Activated CD4-positive, alpha-beta T cell treated with anti-CD3 and anti-CD28 coated beads, Interleukin-2, amount 10 ng/mL, durations not matched to agents 24 days and 14 days (primary cell): ENCODE measurements at regions of chr1 and their contacts with region 1.

Region 1: GRCh38 chr1:116372587-116373444 is at the start of gene ATP1A1:
- DNase-seq: peak; percentile 99
- H3K4me3 Mint-ChIP-seq: peak within 1 kb of the TSS; percentile 96
- H3K27ac Mint-ChIP-seq: peak within 1 kb of the TSS; percentile 96
- H3K4me1 Mint-ChIP-seq: peaks cover 32% of the 10 kb centered on the region
- H3K27me3 Mint-ChIP-seq: peaks cover 22% of the 10 kb centered on the region
- total RNA-seq, gene ATP1A1: 252 and 261 TPM in 2 replicates

Region 2: DNA sequence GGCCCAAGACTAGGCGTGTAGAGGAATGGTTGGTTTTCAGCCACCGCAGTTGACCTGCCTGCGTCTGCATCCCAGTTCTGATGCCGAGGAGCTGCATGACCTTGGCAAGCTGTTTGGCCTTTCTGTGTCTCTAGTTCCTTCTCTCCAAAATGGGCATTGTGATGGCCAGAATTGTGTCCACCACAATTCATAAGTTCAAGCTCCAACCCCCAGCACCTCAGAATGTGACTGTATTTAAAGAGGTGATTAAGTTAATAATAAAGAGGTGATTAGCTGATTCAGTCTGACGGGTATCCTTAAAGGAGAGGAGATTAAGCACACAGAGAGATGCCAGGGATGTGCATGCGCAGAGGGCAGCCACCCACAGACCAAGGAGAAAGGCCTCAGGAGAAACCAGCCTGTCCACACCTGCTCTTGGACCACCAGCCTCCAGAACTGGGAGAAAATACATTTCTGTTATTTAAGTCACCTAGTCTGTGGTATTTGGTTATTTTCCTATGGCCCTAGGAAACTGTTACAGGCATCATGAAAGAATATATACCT is 233.2 kb before region 1 on chr1:
- intact Hi-C with region 1: loop called (anchors 2 kb)
- DNase-seq: no peak
- H3K4me3 Mint-ChIP-seq: no peak overlapping the region
- H3K27ac Mint-ChIP-seq: no peak overlapping the region
- H3K4me1 Mint-ChIP-seq: peaks cover 5% of the 10 kb centered on the region
- H3K27me3 Mint-ChIP-seq: peaks cover 20% of the 10 kb centered on the region

Region 3: DNA sequence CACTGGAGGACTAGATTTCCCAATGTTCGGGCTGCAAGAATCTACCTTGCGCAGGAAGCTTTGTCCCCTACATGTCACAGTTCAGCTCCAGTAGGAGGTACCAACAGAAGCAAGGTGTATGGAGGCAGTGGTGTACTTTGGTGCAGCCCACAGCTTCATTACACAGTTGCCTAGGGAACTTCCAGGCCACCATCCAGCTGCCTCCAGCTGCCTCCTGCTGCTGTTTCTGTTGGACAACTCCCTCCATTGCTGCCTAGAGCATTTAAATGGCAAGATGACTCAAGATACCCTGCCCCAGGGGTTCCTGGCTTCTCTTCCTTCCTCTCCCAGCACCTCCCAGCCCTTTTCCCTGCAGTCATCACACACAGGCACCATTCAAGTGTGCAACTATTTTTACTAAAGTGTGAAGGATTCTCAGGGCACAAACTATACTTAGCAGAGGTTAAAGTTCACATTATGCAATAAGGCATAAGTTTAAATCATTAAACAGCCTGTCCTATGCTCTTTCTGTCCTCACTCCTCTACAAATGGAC is 38.7 kb before region 1 on chr1:
- intact Hi-C with region 1: no loop called
- DNase-seq: no peak
- H3K4me3 Mint-ChIP-seq: no peak overlapping the region
- H3K27ac Mint-ChIP-seq: no peak overlapping the region
- H3K4me1 Mint-ChIP-seq: peaks cover 10% of the 10 kb centered on the region
- H3K27me3 Mint-ChIP-seq: peaks cover 2% of the 10 kb centered on the region

Region 4: DNA sequence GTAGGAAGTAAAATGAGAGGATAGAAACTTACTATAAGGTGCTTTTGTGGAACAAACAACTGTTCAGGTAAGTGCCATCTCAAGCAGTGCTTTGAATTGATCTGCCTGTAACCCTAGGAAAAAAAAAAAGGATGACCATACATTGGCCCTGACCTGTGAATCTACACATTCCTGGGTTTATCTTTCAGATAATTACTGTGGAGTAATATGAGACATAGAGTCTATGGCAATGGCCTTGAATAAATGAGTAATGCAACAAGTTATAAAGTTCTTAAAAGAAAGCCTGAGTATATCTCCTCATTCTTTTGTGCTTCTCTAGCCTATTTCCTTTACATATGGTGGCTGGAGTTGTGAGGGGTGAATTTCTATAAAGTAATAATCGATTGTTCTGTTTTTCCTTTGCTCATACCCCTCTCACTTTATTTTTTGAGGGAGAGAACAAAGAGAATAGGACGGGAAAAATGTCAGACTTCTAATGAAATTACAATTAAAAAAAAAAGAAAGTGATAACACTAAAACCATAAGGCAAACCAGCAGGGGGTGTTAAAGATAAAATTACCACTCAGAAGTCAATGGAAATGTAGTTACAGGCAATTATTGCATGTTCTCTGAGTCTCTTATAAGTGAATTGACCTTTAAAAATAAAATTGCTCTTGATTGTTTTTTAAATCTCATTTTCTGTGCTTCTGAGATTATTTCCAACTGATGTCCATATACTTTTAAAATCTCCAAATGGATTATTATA is 12.2 kb before region 1 on chr1:
- intact Hi-C with region 1: loop called (anchors 2 kb)
- DNase-seq: no peak
- H3K4me3 Mint-ChIP-seq: no peak overlapping the region
- H3K27ac Mint-ChIP-seq: no peak overlapping the region
- H3K4me1 Mint-ChIP-seq: peaks cover 2% of the 10 kb centered on the region
- H3K27me3 Mint-ChIP-seq: peaks cover 6% of the 10 kb centered on the region

Region 5: GRCh38 chr1:116389013-116389412 is 16.2 kb after region 1 on chr1:
- intact Hi-C with region 1: loop called (anchors 2 kb)
- DNase-seq: no peak
- H3K4me3 Mint-ChIP-seq: no peak overlapping the region
- H3K27ac Mint-ChIP-seq: peak overlapping the region; percentile 37
- H3K4me1 Mint-ChIP-seq: peaks cover 47% of the 10 kb centered on the region
- H3K27me3 Mint-ChIP-seq: no peaks in the 10 kb centered on the region

Region 6: GRCh38 chr1:116418091-116418830 is 45.4 kb after region 1 on chr1:
- intact Hi-C with region 1: loop called (anchors 1 kb)
- DNase-seq: peak; percentile 96
- H3K4me3 Mint-ChIP-seq: peak overlapping the region; percentile 89
- H3K27ac Mint-ChIP-seq: peak overlapping the region; percentile 88
- H3K4me1 Mint-ChIP-seq: peaks cover 47% of the 10 kb centered on the region
- H3K27me3 Mint-ChIP-seq: peaks cover 9% of the 10 kb centered on the region

Region 7: GRCh38 chr1:116546354-116546977 is 173.7 kb after region 1 on chr1:
- intact Hi-C with region 1: no loop called
- DNase-seq: no peak
- H3K4me3 Mint-ChIP-seq: peak overlapping the region; percentile 81
- H3K27ac Mint-ChIP-seq: peak overlapping the region; percentile 98
- H3K4me1 Mint-ChIP-seq: peaks cover 71% of the 10 kb centered on the region
- H3K27me3 Mint-ChIP-seq: no peaks in the 10 kb centered on the region

Region 8: GRCh38 chr1:116806245-116806644 is 433.4 kb after region 1 on chr1:
- intact Hi-C with region 1: loop called (anchors 10 kb)
- DNase-seq: peak; percentile 83
- H3K4me3 Mint-ChIP-seq: peak overlapping the region; percentile 79
- H3K27ac Mint-ChIP-seq: peak overlapping the region; percentile 95
- H3K4me1 Mint-ChIP-seq: peaks cover 84% of the 10 kb centered on the region
- H3K27me3 Mint-ChIP-seq: no peaks in the 10 kb centered on the region

Region 9: DNA sequence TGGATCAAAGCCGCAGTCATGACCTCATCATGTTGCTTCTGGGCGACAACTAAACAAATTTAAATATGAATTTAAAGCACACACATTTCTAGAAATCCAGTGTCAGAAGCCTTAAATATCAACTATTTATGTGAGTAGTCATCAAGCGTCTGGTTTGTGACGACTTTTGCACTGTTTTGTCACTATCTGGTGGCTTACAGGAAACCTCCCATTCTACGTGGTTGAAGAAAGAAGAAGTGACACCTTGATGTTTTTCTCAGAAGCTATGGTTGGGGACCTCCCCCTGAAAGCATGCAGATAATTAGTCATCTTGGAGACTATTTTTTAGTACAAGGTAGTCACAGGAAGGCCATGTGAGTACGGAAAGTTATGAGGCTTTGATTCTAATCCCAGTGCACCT is 1291.5 kb after region 1 on chr1:
- intact Hi-C with region 1: loop called (anchors 10 kb)
- DNase-seq: peak; percentile 92
- H3K4me3 Mint-ChIP-seq: peak overlapping the region; percentile 17
- H3K27ac Mint-ChIP-seq: peak overlapping the region; percentile 89
- H3K4me1 Mint-ChIP-seq: peaks cover 79% of the 10 kb centered on the region
- H3K27me3 Mint-ChIP-seq: peaks cover 9% of the 10 kb centered on the region